HCT116 (cell line): ENCODE measurements at regions of chr12 and their contacts with region 1.

Region 1: GRCh38 chr12:55619354-55620138 is 17.1 kb upstream of the OR10P1 start:
- DNase-seq: peak; percentile 91
- ATAC-seq: peak; percentile 97
- H3K4me3 ChIP-seq: no peak overlapping the region
- H3K27ac ChIP-seq: no peak overlapping the region
- H3K4me1 ChIP-seq: peaks cover 0 to 3% of the 10 kb centered on the region in 2 experiments; a peak in 1 of 4 replicates
- H3K27me3 ChIP-seq: peaks cover 15% of the 10 kb centered on the region; the same call in 1 of the 2 replicates
- CTCF ChIP-seq: peak; percentile 64 to 98 (median 95)
- POLR2A ChIP-seq: no peak
- RAD21 ChIP-seq: peak; percentile 93

Region 2: DNA sequence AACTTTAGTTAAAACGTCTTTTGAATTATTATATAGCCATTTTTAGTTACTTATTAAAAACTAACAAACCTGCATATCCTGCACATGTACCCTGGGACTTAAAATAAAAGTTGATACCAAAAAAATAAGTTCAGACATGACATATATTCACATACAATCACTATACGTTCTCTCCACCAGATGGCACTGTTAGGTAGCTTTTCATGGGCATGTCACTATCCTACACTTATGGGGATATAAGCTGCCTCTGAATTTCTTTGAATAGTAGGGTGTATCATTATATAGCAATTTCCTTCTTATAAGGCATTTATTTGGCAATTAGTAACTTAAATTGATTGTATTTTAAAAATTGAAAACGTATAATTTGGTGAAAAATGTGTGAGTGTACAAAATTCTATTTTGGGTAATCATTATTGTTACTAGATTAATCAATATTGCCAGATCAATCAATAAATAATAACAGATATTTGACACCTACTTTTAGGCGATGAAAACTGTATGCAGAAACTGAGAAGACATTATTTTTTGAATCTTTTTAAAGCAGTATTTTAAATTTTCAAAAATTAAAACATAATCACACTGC is 430.5 kb before region 1 on chr12:
- CTCF ChIA-PET with region 1: interaction called, 31 read pairs
- POLR2A ChIA-PET with region 1: no interaction called
- RAD21 ChIA-PET with region 1: interaction called in 1 of 2 experiments, 4 read pairs
- intact Hi-C with region 1: loop called (anchors 1 kb)
- DNase-seq: peak; percentile 69
- ATAC-seq: peak; percentile 88
- H3K4me3 ChIP-seq: no peak overlapping the region
- H3K27ac ChIP-seq: no peak overlapping the region
- H3K4me1 ChIP-seq: no peaks in the 10 kb centered on the region
- H3K27me3 ChIP-seq: no peaks in the 10 kb centered on the region; the same call in 1 of the 2 replicates
- CTCF ChIP-seq: peak; percentile 56 to 82 (median 76); a peak in 5 of 6 replicates
- POLR2A ChIP-seq: no peak
- RAD21 ChIP-seq: peak; percentile 85

Region 3: GRCh38 chr12:55392032-55392795 is 227.3 kb before region 1 on chr12:
- CTCF ChIA-PET with region 1: no interaction called
- POLR2A ChIA-PET with region 1: no interaction called
- RAD21 ChIA-PET with region 1: no interaction called
- intact Hi-C with region 1: loop called (anchors 10 kb)
- DNase-seq: no peak
- ATAC-seq: no peak
- H3K4me3 ChIP-seq: no peak overlapping the region
- H3K27ac ChIP-seq: no peak overlapping the region
- H3K4me1 ChIP-seq: no peaks in the 10 kb centered on the region
- H3K27me3 ChIP-seq: peaks cover 22% of the 10 kb centered on the region
- CTCF ChIP-seq: no peak
- POLR2A ChIP-seq: no peak
- RAD21 ChIP-seq: no peak

Region 4: DNA sequence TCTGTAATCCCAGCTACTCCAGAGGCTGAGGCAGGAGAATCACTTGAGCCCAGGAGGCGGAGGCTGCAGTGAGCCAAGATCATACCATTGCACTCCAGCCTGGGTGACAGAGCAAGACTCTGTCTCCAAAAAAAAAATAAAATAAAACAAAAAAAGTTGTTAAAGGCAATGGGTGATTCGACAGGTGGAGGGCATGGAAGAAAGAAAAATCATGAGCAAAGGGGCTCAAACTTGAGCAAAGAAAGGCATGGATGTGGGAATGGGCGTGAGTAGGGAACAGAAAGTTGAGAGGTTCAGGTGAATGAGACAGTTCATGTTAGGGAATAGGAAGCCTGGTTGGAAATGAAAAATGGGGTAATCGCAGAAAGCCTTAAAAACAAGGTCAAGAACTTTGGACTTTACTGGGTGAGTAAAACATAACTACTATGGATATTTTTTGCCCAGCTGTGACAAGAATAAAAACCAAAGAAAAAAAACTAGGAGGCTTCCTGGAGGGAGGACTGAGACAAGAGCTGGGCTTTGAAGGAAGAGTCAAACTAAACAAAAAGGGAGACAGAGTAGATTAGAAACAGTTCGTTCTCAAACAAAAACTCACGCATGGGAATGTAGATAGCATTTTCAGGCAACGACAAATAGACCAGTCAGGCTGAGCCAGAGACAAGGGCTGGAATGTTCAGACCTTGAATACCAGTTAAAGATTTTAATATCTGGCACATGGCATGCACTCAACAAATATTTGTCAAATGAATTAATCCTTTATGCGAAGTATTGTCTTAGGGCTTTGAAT is 289.4 kb after region 1 on chr12:
- CTCF ChIA-PET with region 1: no interaction called
- POLR2A ChIA-PET with region 1: no interaction called
- RAD21 ChIA-PET with region 1: no interaction called
- intact Hi-C with region 1: no loop called
- DNase-seq: no peak
- ATAC-seq: no peak
- H3K4me3 ChIP-seq: no peak overlapping the region
- H3K27ac ChIP-seq: no peak overlapping the region
- H3K4me1 ChIP-seq: no peaks in the 10 kb centered on the region
- H3K27me3 ChIP-seq: no peaks in the 10 kb centered on the region
- CTCF ChIP-seq: no peak
- POLR2A ChIP-seq: no peak
- RAD21 ChIP-seq: no peak